HCT116 (cell line): ENCODE measurements at regions of chr18 and their contacts with region 1.

Region 1: DNA sequence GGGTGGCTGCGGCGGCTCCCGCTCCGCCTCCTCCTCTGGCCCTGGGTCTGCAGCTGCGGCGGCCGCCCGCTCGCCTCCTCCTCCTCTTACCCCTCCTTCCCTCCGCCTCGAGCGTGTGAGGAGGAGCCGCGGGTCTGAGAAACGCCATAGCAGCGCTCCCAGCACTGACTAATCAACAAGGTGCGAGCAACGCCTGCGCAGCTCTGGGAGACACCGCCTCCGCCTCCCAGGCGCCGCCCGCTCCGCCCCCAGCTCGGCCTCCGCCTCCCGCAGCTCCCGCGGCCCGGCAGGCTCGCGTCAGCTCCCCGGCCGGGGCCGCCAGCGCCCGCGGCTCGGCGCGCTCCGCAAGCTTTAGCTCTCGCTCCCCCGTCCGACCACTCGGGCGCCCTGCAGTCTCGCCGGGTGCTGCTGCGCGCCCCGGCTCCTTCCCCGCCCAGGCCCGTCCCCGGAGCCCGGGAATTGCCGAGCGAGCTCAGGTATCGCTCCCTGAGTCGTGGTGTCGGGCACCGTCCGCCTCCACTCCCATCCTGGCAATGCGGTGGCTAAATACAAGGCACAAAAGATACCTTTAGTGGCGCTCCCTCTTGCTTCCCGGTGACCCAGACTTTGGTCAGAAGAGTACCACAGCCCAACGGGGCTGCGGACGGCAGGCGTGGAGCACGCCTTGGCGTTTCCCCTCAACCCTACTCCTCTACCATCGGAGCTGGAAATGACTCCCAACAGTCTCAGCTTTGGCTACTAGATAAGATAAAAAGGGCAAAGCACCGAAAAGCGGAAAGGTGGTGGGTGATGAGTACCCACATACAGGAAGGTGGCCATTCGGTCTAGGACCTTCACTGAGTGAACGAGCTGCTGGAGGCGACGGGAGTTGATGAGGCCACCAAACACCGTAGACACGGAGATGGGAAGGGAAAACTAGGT is at the start of gene GAREM1:
- DNase-seq: peak; percentile 87
- ATAC-seq: peak; percentile 93
- H3K4me3 ChIP-seq: peak within 1 kb of the TSS; percentile 63 to 77
- H3K27ac ChIP-seq: peak within 1 kb of the TSS; percentile 70
- H3K4me1 ChIP-seq: peaks cover 12 to 22% of the 10 kb centered on the region in 2 experiments; a peak in 3 of 4 replicates
- H3K27me3 ChIP-seq: no peaks in the 10 kb centered on the region
- CTCF ChIP-seq: peak; percentile 38 to 45 (median 40); a peak in 5 of 6 replicates
- POLR2A ChIP-seq: peak; percentile 73
- RAD21 ChIP-seq: peak; percentile 76
- total RNA-seq, gene GAREM1: 11.1 TPM

Region 2: DNA sequence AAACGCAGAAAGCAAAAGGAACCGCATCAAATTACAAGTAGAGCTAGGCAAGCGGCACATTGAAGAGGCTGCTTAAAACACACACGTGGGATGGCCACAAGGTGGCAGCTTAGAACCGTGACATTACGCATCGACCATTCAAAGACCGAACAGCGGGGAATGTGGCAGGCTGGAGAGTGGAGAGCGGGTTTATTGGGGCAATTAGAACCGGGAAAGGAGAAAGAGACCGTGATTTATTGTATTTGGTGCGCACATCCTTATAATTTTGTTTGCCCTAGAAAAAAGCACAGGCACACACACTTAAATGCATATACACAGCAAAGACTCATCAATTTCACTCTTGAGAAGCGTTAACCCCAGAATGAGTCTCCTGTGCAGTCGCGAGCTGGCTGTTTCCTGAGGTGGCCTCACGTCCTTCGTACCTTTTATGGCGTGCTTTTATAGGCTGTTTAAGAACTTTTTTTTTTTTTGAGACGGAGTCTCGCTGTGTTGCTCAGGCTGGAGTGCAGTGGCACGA is 312.8 kb before region 1 on chr18:
- CTCF ChIA-PET with region 1: interaction called, 5 read pairs
- POLR2A ChIA-PET with region 1: no interaction called
- RAD21 ChIA-PET with region 1: interaction called, 3 read pairs
- intact Hi-C with region 1: loop called (anchors 5 kb)
- DNase-seq: peak; percentile 85
- ATAC-seq: peak; percentile 98
- H3K4me3 ChIP-seq: 0 out of 4 replicates have a peak overlapping the region, but pooled peaks of 1 of the 2 experiments have one; percentile 20
- H3K27ac ChIP-seq: no peak overlapping the region
- H3K4me1 ChIP-seq: peaks cover 4 to 16% of the 10 kb centered on the region in 2 experiments; a peak in 3 of 4 replicates
- H3K27me3 ChIP-seq: no peaks in the 10 kb centered on the region
- CTCF ChIP-seq: peak; percentile 75 to 86 (median 76)
- POLR2A ChIP-seq: no peak
- RAD21 ChIP-seq: peak; percentile 94

Region 3: GRCh38 chr18:32271672-32272208 is 199.2 kb before region 1 on chr18:
- CTCF ChIA-PET with region 1: interaction called, 27 read pairs
- POLR2A ChIA-PET with region 1: no interaction called
- RAD21 ChIA-PET with region 1: interaction called, 6 to 8 read pairs
- intact Hi-C with region 1: loop called (anchors 2 kb)
- DNase-seq: peak; percentile 16
- ATAC-seq: peak; percentile 87
- H3K4me3 ChIP-seq: no peak overlapping the region
- H3K27ac ChIP-seq: no peak overlapping the region
- H3K4me1 ChIP-seq: no peaks in the 10 kb centered on the region
- H3K27me3 ChIP-seq: no peaks in the 10 kb centered on the region
- CTCF ChIP-seq: peak; percentile 68 to 83 (median 71)
- POLR2A ChIP-seq: no peak
- RAD21 ChIP-seq: peak; percentile 90

Region 4: GRCh38 chr18:32289483-32290075 is 181.4 kb before region 1 on chr18:
- CTCF ChIA-PET with region 1: interaction called, 23 read pairs
- POLR2A ChIA-PET with region 1: interaction called, 4 read pairs
- RAD21 ChIA-PET with region 1: interaction called, 6 to 7 read pairs
- intact Hi-C with region 1: loop called (anchors 1 kb)
- DNase-seq: peak; percentile 63
- ATAC-seq: peak; percentile 95
- H3K4me3 ChIP-seq: no peak overlapping the region
- H3K27ac ChIP-seq: no peak overlapping the region
- H3K4me1 ChIP-seq: peaks cover 0 to 2% of the 10 kb centered on the region in 2 experiments; a peak in 1 of 4 replicates
- H3K27me3 ChIP-seq: no peaks in the 10 kb centered on the region
- CTCF ChIP-seq: peak; percentile 72 to 82 (median 82); a peak in 5 of 6 replicates
- POLR2A ChIP-seq: no peak
- RAD21 ChIP-seq: peak; percentile 73

Region 5: GRCh38 chr18:32383050-32383819 is 87.7 kb before region 1 on chr18:
- CTCF ChIA-PET with region 1: no interaction called
- POLR2A ChIA-PET with region 1: no interaction called
- RAD21 ChIA-PET with region 1: no interaction called
- intact Hi-C with region 1: loop called (anchors 5 kb)
- DNase-seq: peak; percentile 69
- ATAC-seq: peak; percentile 84
- H3K4me3 ChIP-seq: no peak overlapping the region
- H3K27ac ChIP-seq: peak overlapping the region; percentile 43; the same call in 1 of the 2 replicates
- H3K4me1 ChIP-seq: peaks cover 3 to 30% of the 10 kb centered on the region in 2 experiments
- H3K27me3 ChIP-seq: no peaks in the 10 kb centered on the region
- CTCF ChIP-seq: no peak
- POLR2A ChIP-seq: no peak
- RAD21 ChIP-seq: peak; percentile 13; the same call in 1 of the 2 replicates

Region 6: DNA sequence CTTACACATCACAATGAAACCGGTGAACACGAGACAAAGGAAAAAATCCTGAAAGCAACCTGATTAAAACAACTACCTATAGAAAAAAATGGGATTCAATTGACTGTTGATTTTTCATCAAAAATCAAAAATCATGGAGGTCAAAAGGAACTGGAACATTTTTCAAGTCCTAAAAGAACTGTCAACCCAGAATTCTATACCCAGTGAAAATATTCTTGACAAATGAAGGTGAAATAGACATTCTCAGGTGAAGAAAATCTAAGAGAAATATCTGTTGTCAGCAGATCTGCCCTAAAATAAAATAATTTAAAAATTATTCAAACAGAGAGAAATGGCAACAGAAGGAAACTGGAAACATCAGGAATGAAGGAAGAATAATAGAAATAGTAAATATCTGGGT is 39.2 kb before region 1 on chr18:
- CTCF ChIA-PET with region 1: no interaction called
- POLR2A ChIA-PET with region 1: no interaction called
- RAD21 ChIA-PET with region 1: no interaction called
- intact Hi-C with region 1: no loop called
- DNase-seq: no peak
- ATAC-seq: no peak
- H3K4me3 ChIP-seq: no peak overlapping the region
- H3K27ac ChIP-seq: no peak overlapping the region
- H3K4me1 ChIP-seq: no peaks in the 10 kb centered on the region
- H3K27me3 ChIP-seq: no peaks in the 10 kb centered on the region
- CTCF ChIP-seq: no peak
- POLR2A ChIP-seq: no peak
- RAD21 ChIP-seq: no peak

Region 7: GRCh38 chr18:32707147-32707546 is 236.2 kb after region 1 on chr18:
- CTCF ChIA-PET with region 1: no interaction called
- POLR2A ChIA-PET with region 1: no interaction called
- RAD21 ChIA-PET with region 1: no interaction called
- intact Hi-C with region 1: no loop called
- DNase-seq: no peak
- ATAC-seq: no peak
- H3K4me3 ChIP-seq: no peak overlapping the region
- H3K27ac ChIP-seq: no peak overlapping the region
- H3K4me1 ChIP-seq: no peaks in the 10 kb centered on the region
- H3K27me3 ChIP-seq: no peaks in the 10 kb centered on the region
- CTCF ChIP-seq: no peak
- POLR2A ChIP-seq: no peak
- RAD21 ChIP-seq: no peak